Endothelial cell of umbilical vein (primary cell): ENCODE measurements at regions of chr3 and their contacts with region 1.

Region 1: GRCh38 chr3:100041328-100041749 is 73.0 kb downstream of the FILIP1L start:
- DNase-seq: peak; percentile 99
- H3K4me3 ChIP-seq: peak overlapping the region in 1 of 3 experiments; percentile 29
- H3K27ac ChIP-seq: peak overlapping the region; percentile 100
- H3K4me1 ChIP-seq: peaks cover 46% of the 10 kb centered on the region
- H3K27me3 ChIP-seq: no peaks in the 10 kb centered on the region
- CTCF ChIP-seq: no peak
- POLR2A ChIP-seq: no peak

Region 2: GRCh38 chr3:99859825-99860224 is 181.5 kb before region 1 on chr3:
- CTCF ChIA-PET with region 1: interaction called, 4 read pairs
- POLR2A ChIA-PET with region 1: no interaction called
- dilution Hi-C with region 1: no loop called
- intact Hi-C with region 1: loop called (anchors 1 kb)
- DNase-seq: peak; percentile 32
- H3K4me3 ChIP-seq: no peak overlapping the region
- H3K27ac ChIP-seq: peak overlapping the region; percentile 2
- H3K4me1 ChIP-seq: peaks cover 26% of the 10 kb centered on the region
- H3K27me3 ChIP-seq: no peaks in the 10 kb centered on the region
- CTCF ChIP-seq: no peak
- POLR2A ChIP-seq: no peak

Region 3: GRCh38 chr3:99875929-99876841 is 165.2 kb before region 1 on chr3:
- CTCF ChIA-PET with region 1: interaction called, 4 read pairs
- POLR2A ChIA-PET with region 1: interaction called, 19 read pairs
- dilution Hi-C with region 1: no loop called
- intact Hi-C with region 1: loop called (anchors 1 kb)
- DNase-seq: peak; percentile 89
- H3K4me3 ChIP-seq: peak overlapping the region; percentile 60 to 96 (median 91)
- H3K27ac ChIP-seq: peak overlapping the region; percentile 99
- H3K4me1 ChIP-seq: peaks cover 49% of the 10 kb centered on the region
- H3K27me3 ChIP-seq: no peaks in the 10 kb centered on the region
- CTCF ChIP-seq: peak in 1 of 2 donors; percentile 21
- POLR2A ChIP-seq: peak; percentile 96

Region 4: GRCh38 chr3:99901200-99901926 is 140.0 kb before region 1 on chr3:
- CTCF ChIA-PET with region 1: interaction called, 8 read pairs
- POLR2A ChIA-PET with region 1: interaction called, 6 read pairs
- dilution Hi-C with region 1: no loop called
- intact Hi-C with region 1: loop called (anchors 1 kb)
- DNase-seq: peak; percentile 92
- H3K4me3 ChIP-seq: peak overlapping the region in 1 of 3 experiments; percentile 24
- H3K27ac ChIP-seq: peak overlapping the region; percentile 94
- H3K4me1 ChIP-seq: peaks cover 34% of the 10 kb centered on the region
- H3K27me3 ChIP-seq: no peaks in the 10 kb centered on the region
- CTCF ChIP-seq: no peak
- POLR2A ChIP-seq: no peak

Region 5: GRCh38 chr3:100006570-100007271 is 34.6 kb before region 1 on chr3:
- CTCF ChIA-PET with region 1: interaction called, 3 read pairs
- POLR2A ChIA-PET with region 1: no interaction called
- dilution Hi-C with region 1: no loop called
- intact Hi-C with region 1: loop called (anchors 2 kb)
- DNase-seq: peak; percentile 72
- H3K4me3 ChIP-seq: no peak overlapping the region
- H3K27ac ChIP-seq: no peak overlapping the region
- H3K4me1 ChIP-seq: peaks cover 73% of the 10 kb centered on the region
- H3K27me3 ChIP-seq: no peaks in the 10 kb centered on the region
- CTCF ChIP-seq: no peak
- POLR2A ChIP-seq: no peak

Region 6: DNA sequence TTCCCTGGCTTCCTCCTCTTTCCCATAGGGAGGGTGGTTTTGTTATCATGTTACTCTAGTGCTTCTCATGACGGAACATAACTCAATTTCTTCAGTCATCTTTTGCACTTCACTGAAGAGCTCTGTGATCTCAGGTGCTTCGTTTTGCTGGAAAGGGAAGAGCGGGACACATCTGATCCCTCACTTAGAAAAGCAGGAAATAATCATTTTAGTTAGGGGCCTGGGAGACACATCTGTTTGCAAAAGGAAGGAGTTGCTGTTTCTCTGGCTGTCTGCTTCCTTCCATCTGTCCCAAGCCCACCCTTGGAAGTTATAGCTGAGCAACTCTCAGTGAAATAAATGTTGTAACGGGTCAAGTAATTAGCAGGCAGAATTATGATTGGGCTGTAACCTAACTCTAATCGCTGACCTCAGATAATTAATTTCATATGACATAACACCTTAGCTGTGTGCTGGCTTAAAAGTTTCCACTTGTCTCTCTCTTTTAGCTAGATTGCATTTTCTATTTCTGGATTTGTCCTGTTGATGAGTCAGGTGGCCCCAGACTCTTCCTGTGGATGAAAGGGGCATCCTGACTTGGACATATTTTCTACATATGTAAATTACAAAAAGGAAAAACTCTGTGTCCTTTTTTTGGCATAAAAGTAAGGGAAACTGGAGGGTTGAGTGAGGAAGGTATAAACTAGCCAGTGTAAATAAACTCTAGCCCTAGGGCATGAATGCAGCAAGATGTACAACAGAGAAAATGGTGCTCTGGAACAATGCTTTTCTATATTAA is 84.0 kb after region 1 on chr3:
- CTCF ChIA-PET with region 1: no interaction called
- POLR2A ChIA-PET with region 1: no interaction called
- dilution Hi-C with region 1: no loop called
- intact Hi-C with region 1: loop called (anchors 1 kb)
- DNase-seq: peak; percentile 88
- H3K4me3 ChIP-seq: peak overlapping the region in 1 of 3 experiments; percentile 5
- H3K27ac ChIP-seq: peak overlapping the region; percentile 41
- H3K4me1 ChIP-seq: peaks cover 18% of the 10 kb centered on the region
- H3K27me3 ChIP-seq: no peaks in the 10 kb centered on the region
- CTCF ChIP-seq: no peak
- POLR2A ChIP-seq: no peak

Region 7: DNA sequence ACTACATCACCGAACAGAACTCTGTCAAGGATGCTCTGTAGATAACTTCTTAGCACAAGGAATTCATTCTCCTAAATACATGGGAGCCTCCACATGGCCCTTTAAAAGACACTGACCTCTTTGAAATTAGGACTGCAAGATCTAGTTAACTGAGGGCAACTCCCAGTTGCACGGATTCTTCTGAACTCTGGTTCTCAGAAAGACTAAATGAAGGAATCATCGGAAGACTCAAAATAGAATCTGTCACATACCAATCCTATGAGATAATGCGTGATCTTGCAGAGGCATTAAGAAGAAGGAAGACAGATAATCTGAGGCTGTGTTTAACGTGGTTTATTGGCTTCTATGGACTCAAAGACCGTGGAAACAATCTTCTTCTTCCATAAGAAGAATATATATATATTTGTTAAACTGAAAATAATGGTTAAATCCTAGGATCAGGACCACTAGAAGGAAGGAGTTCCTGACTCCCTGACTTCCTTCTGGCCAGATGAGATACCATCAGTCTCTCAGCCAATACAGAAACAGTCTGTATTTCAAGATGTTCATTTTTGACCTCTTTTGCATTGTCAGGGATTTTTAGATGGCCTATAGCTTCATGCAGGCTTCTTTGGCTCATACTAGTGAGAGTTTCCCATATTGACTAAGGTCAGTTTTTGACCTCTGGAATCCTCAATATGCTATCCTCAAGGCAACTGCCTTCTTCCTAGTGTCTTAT is 185.5 kb after region 1 on chr3:
- CTCF ChIA-PET with region 1: no interaction called
- POLR2A ChIA-PET with region 1: no interaction called
- dilution Hi-C with region 1: no loop called
- intact Hi-C with region 1: no loop called
- DNase-seq: no peak
- H3K4me3 ChIP-seq: no peak overlapping the region
- H3K27ac ChIP-seq: no peak overlapping the region
- H3K4me1 ChIP-seq: no peaks in the 10 kb centered on the region
- H3K27me3 ChIP-seq: no peaks in the 10 kb centered on the region
- CTCF ChIP-seq: no peak
- POLR2A ChIP-seq: no peak

Region 8: GRCh38 chr3:100254168-100254777 is 212.9 kb after region 1 on chr3:
- CTCF ChIA-PET with region 1: interaction called, 18 read pairs
- POLR2A ChIA-PET with region 1: no interaction called
- dilution Hi-C with region 1: no loop called
- intact Hi-C with region 1: no loop called
- DNase-seq: peak; percentile 75
- H3K4me3 ChIP-seq: no peak overlapping the region
- H3K27ac ChIP-seq: no peak overlapping the region
- H3K4me1 ChIP-seq: no peaks in the 10 kb centered on the region
- H3K27me3 ChIP-seq: no peaks in the 10 kb centered on the region
- CTCF ChIP-seq: peak; percentile 76 to 81
- POLR2A ChIP-seq: no peak